ENCODE measurements at regions of chr5 and their contacts with region 1.

Region 1: DNA sequence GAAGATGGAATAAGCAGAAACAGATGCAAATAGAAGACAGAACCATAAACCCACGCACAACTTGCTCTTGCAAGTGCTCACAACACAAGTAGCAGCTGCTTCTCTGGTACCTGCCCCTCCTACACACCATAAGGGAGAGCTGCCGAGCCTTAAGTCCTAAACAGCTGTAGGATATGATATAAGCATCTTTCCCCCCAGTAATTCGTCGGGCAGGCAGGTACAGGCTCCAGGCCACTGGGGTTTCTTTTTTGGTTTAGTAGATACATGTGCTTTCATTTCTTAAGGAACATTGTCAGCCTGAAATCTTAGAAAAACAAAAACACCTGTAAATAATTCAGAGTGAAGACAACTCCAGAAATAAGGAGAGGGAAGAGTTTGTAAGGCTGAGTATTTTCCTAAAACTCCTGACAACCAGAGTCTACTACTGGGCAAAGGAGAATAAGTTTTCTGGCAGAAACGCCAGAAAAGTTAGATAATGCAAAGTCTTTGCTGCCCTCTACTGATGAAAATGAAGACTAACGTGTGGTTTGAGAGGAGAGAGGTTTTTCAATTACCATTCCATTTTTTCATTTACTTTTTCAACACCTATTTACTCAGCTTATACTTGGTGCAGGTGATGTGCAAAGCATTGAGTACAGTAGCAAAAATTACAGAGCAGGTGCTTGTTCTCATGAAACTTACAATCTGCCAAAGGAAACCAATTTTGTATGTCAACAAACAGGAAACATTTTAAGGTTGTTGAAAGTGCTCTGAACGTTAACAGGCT is 20.1 kb upstream of the TCERG1 start:
- DNase-seq: peak; percentile 43
- H3K4me3 ChIP-seq: no peak overlapping the region
- H3K27ac ChIP-seq: no peak overlapping the region
- H3K4me1 ChIP-seq: peaks cover 7% of the 10 kb centered on the region
- H3K27me3 ChIP-seq: no peaks in the 10 kb centered on the region
- CTCF ChIP-seq: peak; percentile 53 to 67

Region 2: DNA sequence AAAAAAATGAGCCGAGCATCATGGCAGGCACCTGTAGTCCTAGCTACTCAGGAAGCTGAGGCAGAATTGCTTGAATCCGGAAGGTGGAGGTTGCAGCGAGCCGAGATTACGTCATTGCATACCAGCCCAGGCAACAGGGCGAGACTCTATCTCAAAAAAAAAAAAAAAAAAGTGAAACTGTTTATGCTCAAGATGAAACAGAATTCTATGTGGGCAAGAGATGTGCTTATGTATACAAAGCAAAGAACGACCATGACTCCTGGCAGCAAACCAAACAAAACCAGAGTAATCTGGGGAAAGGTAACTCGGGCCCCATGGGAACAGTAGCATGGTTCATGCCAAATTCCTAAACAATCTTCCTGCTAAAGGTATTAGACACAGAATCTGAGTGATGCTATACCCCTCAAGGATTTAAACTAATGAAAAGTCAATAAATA is 289.1 kb before region 1 on chr5:
- CTCF ChIA-PET with region 1: no interaction called
- dilution Hi-C with region 1: no loop called
- in situ Hi-C with region 1: no loop called
- intact Hi-C with region 1: loop called (anchors 10 kb)
- DNase-seq: peak; percentile 9
- H3K4me3 ChIP-seq: no peak overlapping the region
- H3K27ac ChIP-seq: no peak overlapping the region
- H3K4me1 ChIP-seq: no peaks in the 10 kb centered on the region
- H3K27me3 ChIP-seq: no peaks in the 10 kb centered on the region
- CTCF ChIP-seq: no peak

Region 3: DNA sequence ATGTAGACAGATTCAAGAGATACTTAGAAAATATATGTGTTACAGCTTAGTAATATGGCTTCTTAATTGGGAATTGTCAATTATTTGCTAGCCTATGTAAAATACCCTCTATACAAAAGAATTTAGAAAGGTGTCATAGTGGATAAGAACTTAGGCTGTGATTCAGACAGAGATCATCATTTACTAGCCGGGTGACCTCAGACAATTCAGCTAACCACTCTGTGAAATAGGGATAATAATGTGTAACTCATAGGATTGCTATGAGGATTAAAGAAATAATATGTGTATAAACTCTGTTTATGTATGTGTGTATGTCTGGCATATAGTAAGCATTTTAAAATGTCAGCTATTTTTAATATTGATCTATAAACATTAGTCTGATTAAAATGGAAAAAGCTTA is 238.7 kb before region 1 on chr5:
- CTCF ChIA-PET with region 1: no interaction called
- dilution Hi-C with region 1: no loop called
- in situ Hi-C with region 1: no loop called
- intact Hi-C with region 1: loop called (anchors 10 kb)
- DNase-seq: peak; percentile 74
- H3K4me3 ChIP-seq: no peak overlapping the region
- H3K27ac ChIP-seq: no peak overlapping the region
- H3K4me1 ChIP-seq: peaks cover 17% of the 10 kb centered on the region
- H3K27me3 ChIP-seq: no peaks in the 10 kb centered on the region
- CTCF ChIP-seq: no peak

Region 4: DNA sequence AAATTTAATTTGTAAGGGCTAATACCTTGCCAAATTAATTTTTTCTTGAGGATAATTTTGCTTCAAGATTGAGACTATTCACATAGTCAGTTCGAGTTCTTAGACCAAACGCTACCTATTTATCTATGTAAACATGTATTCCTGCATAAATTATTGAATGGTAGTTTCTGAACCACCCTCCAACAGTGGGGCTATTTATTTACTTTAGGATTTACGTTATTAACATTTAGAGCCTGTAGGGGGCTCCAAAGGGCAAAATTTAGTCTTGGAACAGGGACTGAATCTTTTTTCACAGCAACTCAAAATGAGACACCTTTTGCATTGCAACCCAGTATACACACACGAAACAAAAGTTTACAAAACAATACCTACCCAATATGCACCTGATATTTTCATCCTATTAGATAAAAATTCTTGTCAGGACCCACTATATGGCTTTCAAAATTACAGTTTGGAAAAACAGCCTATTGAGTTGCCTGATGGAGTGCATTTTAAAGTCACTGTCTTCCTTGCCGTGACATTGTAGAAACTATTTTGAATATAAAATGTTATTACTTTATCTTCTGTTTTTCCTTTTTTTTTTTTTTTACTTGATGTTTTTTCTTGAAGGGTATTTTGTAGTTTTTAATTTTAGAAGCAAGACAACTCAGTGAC is 135.5 kb before region 1 on chr5:
- CTCF ChIA-PET with region 1: interaction called, 3 read pairs
- dilution Hi-C with region 1: no loop called
- in situ Hi-C with region 1: loop called (anchors 10 kb)
- intact Hi-C with region 1: loop called (anchors 1 kb)
- DNase-seq: peak; percentile 26
- H3K4me3 ChIP-seq: no peak overlapping the region
- H3K27ac ChIP-seq: no peak overlapping the region
- H3K4me1 ChIP-seq: peaks cover 9% of the 10 kb centered on the region
- H3K27me3 ChIP-seq: no peaks in the 10 kb centered on the region
- CTCF ChIP-seq: peak; percentile 56 to 61

Region 5: GRCh38 chr5:146475190-146475801 is 48.3 kb after region 1 on chr5:
- CTCF ChIA-PET with region 1: no interaction called
- dilution Hi-C with region 1: no loop called
- in situ Hi-C with region 1: no loop called
- intact Hi-C with region 1: no loop called
- DNase-seq: no peak
- H3K4me3 ChIP-seq: no peak overlapping the region
- H3K27ac ChIP-seq: no peak overlapping the region
- H3K4me1 ChIP-seq: no peaks in the 10 kb centered on the region
- H3K27me3 ChIP-seq: no peaks in the 10 kb centered on the region
- CTCF ChIP-seq: peak; percentile 25 to 56